ENCODE measurements at regions of chr17 and their contacts with region 1.

Region 1: GRCh38 chr17:38667099-38667786 is 7.5 kb downstream of the EPOP start:
- DNase-seq: peak; percentile 50 to 75
- ATAC-seq: peak; percentile 75 to 96 (median 87)
- H3K4me3 ChIP-seq: no peak overlapping the region
- H3K4me3 Mint-ChIP-seq: no peak overlapping the region
- H3K27ac ChIP-seq: no peak overlapping the region
- H3K27ac Mint-ChIP-seq: no peak overlapping the region
- H3K4me1 ChIP-seq: no peaks in the 10 kb centered on the region
- H3K4me1 Mint-ChIP-seq: peaks cover 0 to 10% of the 10 kb centered on the region in 2 donors
- H3K27me3 ChIP-seq: peaks cover 30% of the 10 kb centered on the region
- H3K27me3 Mint-ChIP-seq: peaks cover 46 to 60% of the 10 kb centered on the region in 2 donors
- CTCF ChIP-seq: peak; percentile 97

Region 2: GRCh38 chr17:38498186-38498752 is 169.0 kb before region 1 on chr17:
- intact Hi-C with region 1: loop called (anchors 2 kb)
- DNase-seq: no peak
- ATAC-seq: no peak
- H3K4me3 ChIP-seq: no peak overlapping the region
- H3K4me3 Mint-ChIP-seq: no peak overlapping the region
- H3K27ac ChIP-seq: no peak overlapping the region
- H3K27ac Mint-ChIP-seq: no peak overlapping the region
- H3K4me1 ChIP-seq: no peaks in the 10 kb centered on the region
- H3K4me1 Mint-ChIP-seq: peaks cover 8 to 9% of the 10 kb centered on the region in 2 donors
- H3K27me3 ChIP-seq: no peaks in the 10 kb centered on the region
- H3K27me3 Mint-ChIP-seq: peaks cover 0 to 3% of the 10 kb centered on the region in 2 donors
- CTCF ChIP-seq: no peak

Region 3: DNA sequence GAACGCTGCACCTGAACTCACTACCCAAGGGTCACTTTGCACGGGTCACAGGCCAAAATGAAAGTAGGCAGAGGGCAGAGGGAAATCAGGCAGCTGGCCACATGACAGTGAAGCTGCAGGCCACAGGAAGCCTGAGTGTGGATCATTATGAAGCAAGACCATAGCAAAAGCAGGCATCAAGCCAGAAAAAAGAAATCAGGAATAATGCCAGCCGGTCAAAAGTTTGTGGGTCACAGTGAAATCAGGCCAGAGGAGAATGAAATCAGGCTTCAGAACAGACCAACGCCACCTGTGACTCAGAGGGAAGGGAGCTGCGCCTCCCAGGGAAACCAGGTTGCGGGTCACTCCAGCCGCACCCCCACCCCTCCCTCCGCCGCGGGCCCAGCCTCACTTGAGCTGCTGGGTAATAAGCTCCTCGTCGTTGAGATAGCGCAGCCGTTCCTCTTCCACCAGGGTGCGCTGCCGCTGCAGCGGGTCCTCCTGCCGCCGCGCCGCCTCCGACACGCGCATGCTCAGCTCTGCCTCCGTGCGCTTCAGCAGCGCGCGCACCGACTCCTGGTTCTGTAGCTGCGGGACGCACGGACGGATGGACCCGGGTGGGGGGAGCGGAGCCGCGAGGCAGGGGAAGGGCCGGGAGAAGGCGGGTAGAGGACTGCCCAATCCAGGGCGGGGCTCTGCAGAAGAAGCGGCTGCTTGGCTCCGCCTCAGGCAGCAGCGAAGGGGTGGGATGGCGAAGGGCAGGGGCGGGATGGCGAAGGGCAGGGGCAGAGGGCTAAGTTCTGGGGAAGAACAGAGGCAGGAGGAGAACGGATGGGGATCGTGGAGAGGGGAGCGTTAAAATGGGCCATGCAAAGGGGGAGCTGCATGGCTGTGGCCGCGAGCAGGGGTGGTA is 109.2 kb before region 1 on chr17:
- intact Hi-C with region 1: loop called (anchors 1 kb)
- DNase-seq: peak; percentile 85 to 95
- ATAC-seq: peak; percentile 81 to 85 (median 84)
- H3K4me3 ChIP-seq: peak overlapping the region; percentile 55
- H3K4me3 Mint-ChIP-seq: peak overlapping the region; percentile 98
- H3K27ac ChIP-seq: no peak overlapping the region
- H3K27ac Mint-ChIP-seq: peak overlapping the region; percentile 78 to 79
- H3K4me1 ChIP-seq: peaks cover 44% of the 10 kb centered on the region
- H3K4me1 Mint-ChIP-seq: peaks cover 17 to 28% of the 10 kb centered on the region in 2 donors
- H3K27me3 ChIP-seq: peaks cover 24% of the 10 kb centered on the region
- H3K27me3 Mint-ChIP-seq: peaks cover 26 to 39% of the 10 kb centered on the region in 2 donors
- CTCF ChIP-seq: peak; percentile 84

Region 4: DNA sequence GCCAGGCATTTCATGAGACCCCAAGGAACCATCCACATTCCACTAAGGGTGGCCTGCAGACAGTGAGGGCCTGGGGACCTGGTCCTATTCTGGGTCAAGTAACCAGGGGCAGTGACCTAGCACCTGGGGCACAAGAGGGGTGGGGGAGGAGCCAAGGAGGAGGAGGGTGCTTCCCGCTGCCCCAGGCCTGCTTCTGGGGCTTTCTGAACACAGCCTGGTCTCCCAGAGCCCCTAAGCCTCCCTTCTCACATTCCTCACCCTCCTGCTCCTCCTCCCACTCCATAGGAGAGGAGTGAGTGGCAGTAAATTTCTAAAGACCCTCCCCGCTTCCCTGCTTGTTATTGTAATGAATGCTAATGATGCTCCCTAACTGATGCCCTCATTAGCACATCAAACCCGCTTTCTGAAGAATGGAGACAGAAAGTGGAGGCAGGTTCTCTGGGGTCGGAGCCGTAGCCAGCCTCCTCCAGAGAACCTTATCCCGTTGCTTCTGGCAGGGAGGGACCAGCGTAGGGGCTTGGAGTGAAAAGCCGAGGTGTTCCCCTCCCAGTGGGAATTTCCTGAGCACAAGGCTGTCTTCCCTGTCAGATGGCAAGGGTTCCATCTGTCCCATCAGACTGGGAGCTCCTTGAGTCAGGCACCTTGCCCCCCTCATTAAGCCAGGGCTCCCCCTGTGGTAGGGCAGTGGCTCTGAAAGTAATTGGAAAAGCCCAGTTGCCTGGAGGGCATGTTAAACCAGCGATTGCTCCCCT is 57.8 kb before region 1 on chr17:
- intact Hi-C with region 1: loop called (anchors 10 kb)
- DNase-seq: no peak
- ATAC-seq: no peak
- H3K4me3 ChIP-seq: no peak overlapping the region
- H3K4me3 Mint-ChIP-seq: no peak overlapping the region
- H3K27ac ChIP-seq: no peak overlapping the region
- H3K27ac Mint-ChIP-seq: no peak overlapping the region
- H3K4me1 ChIP-seq: peaks cover 22% of the 10 kb centered on the region
- H3K4me1 Mint-ChIP-seq: peaks cover 0 to 13% of the 10 kb centered on the region in 2 donors
- H3K27me3 ChIP-seq: peaks cover 39% of the 10 kb centered on the region
- H3K27me3 Mint-ChIP-seq: peaks cover 49 to 54% of the 10 kb centered on the region in 2 donors
- CTCF ChIP-seq: no peak

Region 5: DNA sequence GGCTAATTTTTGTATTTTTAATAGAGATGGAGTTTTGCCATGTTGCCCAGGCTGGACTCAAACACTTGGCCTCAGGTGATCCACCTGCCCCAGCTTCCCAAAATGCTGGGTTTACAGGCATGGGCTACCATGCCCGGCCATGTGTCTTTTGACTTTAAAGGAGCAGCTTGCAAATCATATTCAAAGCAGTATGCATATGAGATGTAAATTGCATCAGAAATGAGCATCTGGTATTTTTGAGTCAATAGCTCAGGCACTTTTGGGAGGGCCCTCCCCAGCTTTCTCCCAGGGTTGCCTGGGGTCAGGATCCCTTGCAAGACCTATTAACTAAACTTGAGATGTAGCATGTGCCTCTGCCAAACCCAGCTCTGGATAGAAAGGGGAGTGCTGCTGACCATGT is 14.0 kb before region 1 on chr17:
- intact Hi-C with region 1: no loop called
- DNase-seq: no peak
- ATAC-seq: no peak
- H3K4me3 ChIP-seq: no peak overlapping the region
- H3K4me3 Mint-ChIP-seq: no peak overlapping the region
- H3K27ac ChIP-seq: no peak overlapping the region
- H3K27ac Mint-ChIP-seq: no peak overlapping the region
- H3K4me1 ChIP-seq: no peaks in the 10 kb centered on the region
- H3K4me1 Mint-ChIP-seq: peaks cover 0 to 7% of the 10 kb centered on the region in 2 donors
- H3K27me3 ChIP-seq: peaks cover 3% of the 10 kb centered on the region
- H3K27me3 Mint-ChIP-seq: peaks cover 18 to 23% of the 10 kb centered on the region in 2 donors
- CTCF ChIP-seq: no peak